ENCODE measurements at regions of chr19 and their contacts with region 1.

Region 1: DNA sequence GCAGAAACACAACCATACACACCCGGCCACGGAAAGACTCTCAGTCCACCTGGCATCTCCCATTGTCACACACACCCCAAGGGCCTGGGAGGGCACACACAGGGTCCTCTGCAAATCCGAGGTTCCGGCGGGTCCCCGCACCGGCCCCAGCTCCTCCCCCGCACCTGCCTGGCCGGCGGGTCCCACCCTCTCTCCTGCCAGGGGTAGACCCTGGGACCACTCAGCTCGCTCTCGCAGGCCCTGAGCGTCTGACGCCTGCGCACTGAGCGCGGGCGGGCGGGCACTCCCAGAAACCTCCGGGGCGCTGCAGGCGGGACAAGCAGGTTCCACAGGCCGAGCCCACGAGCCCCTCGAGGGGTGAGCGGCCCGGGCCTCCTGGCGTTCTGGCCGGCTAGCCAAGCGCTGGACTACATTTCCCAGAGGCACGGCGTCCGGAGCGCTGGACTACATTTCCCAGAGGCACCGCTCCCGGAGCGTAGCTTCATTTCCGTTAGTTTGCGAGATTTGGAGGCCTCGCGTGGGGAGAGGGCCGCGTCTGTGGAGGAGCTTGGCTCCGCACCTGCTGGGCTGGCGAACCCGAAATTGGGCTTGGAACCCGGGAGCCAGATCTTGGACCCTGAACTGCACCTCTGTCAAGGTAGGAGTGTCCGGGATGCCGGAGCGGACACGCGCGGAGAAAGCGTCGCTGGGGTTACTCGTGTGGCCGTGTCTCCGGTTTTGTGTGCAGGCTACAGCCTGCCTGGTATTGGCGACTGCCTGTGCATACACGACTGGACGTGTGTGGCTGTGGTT is at the start of gene ZNF420:
- DNase-seq: peak; percentile 96
- H3K4me3 Mint-ChIP-seq: peak within 1 kb of the TSS; percentile 91
- H3K27ac Mint-ChIP-seq: peak within 1 kb of the TSS; percentile 92
- H3K4me1 Mint-ChIP-seq: peaks cover 17% of the 10 kb centered on the region
- H3K27me3 Mint-ChIP-seq: no peaks in the 10 kb centered on the region
- total RNA-seq, gene ZNF420: 9.8 and 11.9 TPM in 2 replicates

Region 2: DNA sequence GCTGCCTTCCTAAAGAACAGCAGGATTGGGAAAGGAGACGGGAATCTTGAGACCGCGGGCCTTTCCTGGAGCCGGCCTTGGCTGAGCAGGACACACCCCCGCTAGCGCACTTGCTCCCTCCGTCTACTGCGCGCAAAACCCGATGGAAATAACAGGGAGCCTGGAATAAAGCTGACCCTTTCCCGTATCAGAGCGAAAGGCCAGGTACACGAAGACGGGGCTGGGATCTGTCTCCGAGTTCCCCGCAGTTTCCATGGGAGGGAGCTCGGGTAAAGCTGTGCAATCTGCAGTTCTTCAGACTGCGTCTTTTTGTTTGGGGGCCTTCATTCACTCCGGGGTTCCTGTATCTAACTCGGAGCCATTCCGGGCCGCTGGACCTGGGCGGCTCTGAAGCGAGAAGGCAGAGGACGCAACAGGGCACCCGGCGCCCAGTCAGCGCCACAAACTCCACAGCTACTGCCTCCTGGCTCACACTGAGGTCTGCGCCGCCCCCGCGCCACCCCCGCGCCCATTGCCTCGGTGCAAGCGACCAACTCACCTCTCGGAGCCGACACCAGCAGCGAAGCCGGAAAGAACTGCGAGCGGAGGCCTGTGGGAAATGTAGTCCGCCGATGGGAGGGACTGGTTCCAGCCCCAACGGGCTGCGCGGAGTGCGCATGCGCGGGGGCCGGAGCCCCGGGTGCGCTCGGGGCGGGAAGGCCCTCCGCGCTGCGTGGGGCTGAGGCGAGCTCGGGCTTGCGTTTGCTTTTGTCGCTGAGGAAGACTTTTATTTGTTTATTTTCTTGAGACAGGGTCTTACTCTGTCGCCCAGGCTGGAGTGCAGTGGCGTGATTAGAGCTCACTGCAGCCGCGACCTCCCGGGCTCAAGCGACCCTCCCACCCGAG is 699.3 kb before region 1 on chr19 and contains the start of gene ZFP14:
- intact Hi-C with region 1: loop called (anchors 5 kb)
- DNase-seq: peak; percentile 98
- H3K4me3 Mint-ChIP-seq: peak within 1 kb of the TSS; percentile 84
- H3K27ac Mint-ChIP-seq: peak within 1 kb of the TSS; percentile 90
- H3K4me1 Mint-ChIP-seq: peaks cover 14% of the 10 kb centered on the region
- H3K27me3 Mint-ChIP-seq: no peaks in the 10 kb centered on the region
- total RNA-seq, gene ZFP14: 2.2 and 3.2 TPM in 2 replicates

Region 3: GRCh38 chr19:36528194-36528920 is 549.8 kb before region 1 on chr19 and contains the start of gene ZNF260:
- intact Hi-C with region 1: loop called (anchors 1 kb)
- DNase-seq: peak; percentile 97
- H3K4me3 Mint-ChIP-seq: peak within 1 kb of the TSS; percentile 96
- H3K27ac Mint-ChIP-seq: peak within 1 kb of the TSS; percentile 95
- H3K4me1 Mint-ChIP-seq: peaks cover 17% of the 10 kb centered on the region
- H3K27me3 Mint-ChIP-seq: no peaks in the 10 kb centered on the region
- total RNA-seq, gene ZNF260: 6.7 and 8.0 TPM in 2 replicates

Region 4: DNA sequence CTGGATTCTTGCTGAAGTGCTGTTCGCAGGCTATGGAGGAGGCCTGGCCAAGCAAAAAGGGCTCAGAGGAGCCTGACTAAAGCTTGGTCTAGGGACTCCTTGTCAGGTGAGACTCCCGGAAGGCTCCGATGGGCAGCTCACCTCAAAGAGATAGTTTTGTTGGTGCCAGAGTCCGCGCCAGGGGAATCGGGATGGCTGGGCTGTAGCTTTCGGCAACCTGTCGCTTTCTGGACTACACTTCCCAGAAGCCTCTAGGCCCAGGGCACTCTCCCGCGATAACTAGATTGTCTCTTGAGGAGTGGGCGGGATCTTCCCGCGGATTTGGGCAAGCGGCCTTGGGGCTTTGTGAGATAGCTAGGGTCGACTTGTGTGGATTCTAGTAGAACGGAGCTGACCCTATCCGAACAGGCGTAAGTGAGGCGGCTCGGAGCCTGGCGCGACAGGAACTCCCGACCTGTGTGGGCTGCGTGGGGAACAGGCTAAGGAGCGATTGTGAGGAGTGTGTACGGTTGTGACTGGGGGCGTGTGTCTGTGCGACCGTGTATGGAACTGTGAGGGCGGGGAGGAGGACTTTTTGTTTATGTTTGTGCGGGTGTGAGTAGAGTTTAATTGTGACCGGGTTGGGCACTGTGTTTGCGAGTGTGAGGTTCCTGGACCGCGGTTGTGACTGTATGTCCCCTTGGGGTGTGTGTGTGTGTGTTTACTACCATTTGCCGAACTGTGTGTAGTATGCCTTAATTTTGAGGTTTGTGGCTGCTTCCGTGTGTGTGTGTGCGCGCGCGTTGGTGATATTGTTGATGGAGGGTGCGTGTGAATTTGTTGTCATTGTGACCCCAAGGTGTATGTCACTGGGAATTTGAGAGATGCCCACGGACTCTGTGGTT is 227.3 kb before region 1 on chr19 and contains the start of gene ZNF345:
- intact Hi-C with region 1: loop called (anchors 1 kb)
- DNase-seq: peak; percentile 96
- H3K4me3 Mint-ChIP-seq: no peak within 1 kb of the TSS
- H3K27ac Mint-ChIP-seq: no peak within 1 kb of the TSS
- H3K4me1 Mint-ChIP-seq: peaks cover 2% of the 10 kb centered on the region
- H3K27me3 Mint-ChIP-seq: no peaks in the 10 kb centered on the region
- total RNA-seq, gene ZNF345: 2.8 and 4.2 TPM in 2 replicates

Region 5: GRCh38 chr19:36973021-36973843 is 104.9 kb before region 1 on chr19:
- intact Hi-C with region 1: loop called (anchors 1 kb)
- DNase-seq: peak; percentile 92
- H3K4me3 Mint-ChIP-seq: peak overlapping the region; percentile 99
- H3K27ac Mint-ChIP-seq: peak overlapping the region; percentile 92
- H3K4me1 Mint-ChIP-seq: peaks cover 12% of the 10 kb centered on the region
- H3K27me3 Mint-ChIP-seq: no peaks in the 10 kb centered on the region

Region 6: DNA sequence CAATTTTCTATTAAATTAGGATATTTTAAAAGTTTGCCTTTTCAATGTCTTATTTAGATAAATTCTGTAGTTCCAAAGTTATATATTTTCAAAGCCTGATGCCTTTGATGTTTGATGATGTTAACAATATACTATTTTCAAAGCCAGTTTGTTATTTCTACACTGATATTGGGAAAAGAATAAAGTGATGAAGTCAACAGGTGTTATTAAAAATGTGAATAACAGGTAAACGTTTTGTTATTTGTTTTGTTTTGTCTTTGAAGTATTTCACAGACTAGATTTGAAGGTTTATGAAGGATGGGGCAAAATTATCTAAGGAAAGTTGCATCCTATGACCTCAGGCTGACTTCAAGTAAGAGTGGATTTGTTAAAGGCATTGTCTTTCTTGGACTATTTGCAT is 33.0 kb before region 1 on chr19:
- intact Hi-C with region 1: no loop called
- DNase-seq: no peak
- H3K4me3 Mint-ChIP-seq: no peak overlapping the region
- H3K27ac Mint-ChIP-seq: no peak overlapping the region
- H3K4me1 Mint-ChIP-seq: no peaks in the 10 kb centered on the region
- H3K27me3 Mint-ChIP-seq: no peaks in the 10 kb centered on the region

Region 7: DNA sequence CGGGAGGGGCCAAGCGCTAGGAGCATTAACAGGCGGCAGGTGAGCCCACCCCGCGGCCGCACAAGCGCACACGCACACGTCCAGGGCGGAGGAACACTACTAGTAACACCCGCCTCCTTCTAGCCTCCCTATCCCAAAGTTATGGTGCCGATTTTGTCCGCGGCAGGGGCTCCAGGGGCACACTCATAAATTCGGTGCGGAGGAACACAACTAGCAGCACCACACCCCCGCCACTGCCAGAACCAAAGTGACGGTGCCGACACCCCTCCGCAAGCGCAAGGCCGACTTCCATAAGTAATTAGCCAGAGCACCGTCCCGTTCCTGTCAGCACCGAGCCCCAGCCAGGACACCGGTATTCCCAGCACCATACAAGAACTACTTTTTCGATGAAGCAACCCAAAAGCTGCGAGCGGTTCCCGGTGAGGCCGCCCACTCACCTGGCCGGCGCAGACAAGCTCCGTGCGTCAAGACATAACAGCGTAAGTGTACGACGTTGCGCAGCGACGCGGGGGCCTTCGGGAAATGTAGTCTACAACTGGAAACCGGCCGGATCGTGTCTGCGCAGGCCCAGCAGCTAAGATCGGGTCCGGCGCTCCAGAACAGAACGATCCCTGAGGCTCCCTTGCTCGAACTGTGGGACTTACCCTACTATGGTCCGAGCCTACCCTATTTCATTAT is 516.3 kb after region 1 on chr19 and contains the starts of genes ZNF540 and ZNF571:
- intact Hi-C with region 1: loop called (anchors 2 kb)
- DNase-seq: peak; percentile 96
- H3K4me3 Mint-ChIP-seq: peak within 1 kb of the TSS; percentile 98
- H3K27ac Mint-ChIP-seq: peak within 1 kb of the TSS; percentile 97
- H3K4me1 Mint-ChIP-seq: peaks cover 21% of the 10 kb centered on the region
- H3K27me3 Mint-ChIP-seq: no peaks in the 10 kb centered on the region
- total RNA-seq, gene ZNF540: 0.38 and 0.49 TPM in 2 replicates
- total RNA-seq, gene ZNF571: 0.47 and 1.1 TPM in 2 replicates

Measured in activated CD4-positive, alpha-beta T cell treated with anti-CD3 and anti-CD28 coated beads, Interleukin-2, amount 10 ng/mL, durations not matched to agents 24 days and 14 days (primary cell).